CD8-positive, alpha-beta T cell (primary cell): ENCODE measurements at regions of chr10 and their contacts with region 1.

Region 1: GRCh38 chr10:59625721-59626522 is 83.7 kb downstream of the SLC16A9 start:
- DNase-seq: peak in 8 of 9 experiments; percentile 3 to 75 (median 34)
- ATAC-seq: peak; percentile 66
- H3K4me3 ChIP-seq: no peak overlapping the region
- H3K4me3 Mint-ChIP-seq: no peak overlapping the region
- H3K27ac ChIP-seq: no peak overlapping the region
- H3K27ac Mint-ChIP-seq: no peak overlapping the region
- H3K4me1 ChIP-seq: no peaks in the 10 kb centered on the region
- H3K4me1 Mint-ChIP-seq: peaks cover 3% of the 10 kb centered on the region
- H3K27me3 ChIP-seq: no peaks in the 10 kb centered on the region
- H3K27me3 Mint-ChIP-seq: peaks cover 2% of the 10 kb centered on the region
- CTCF ChIP-seq: peak; percentile 80

Region 2: DNA sequence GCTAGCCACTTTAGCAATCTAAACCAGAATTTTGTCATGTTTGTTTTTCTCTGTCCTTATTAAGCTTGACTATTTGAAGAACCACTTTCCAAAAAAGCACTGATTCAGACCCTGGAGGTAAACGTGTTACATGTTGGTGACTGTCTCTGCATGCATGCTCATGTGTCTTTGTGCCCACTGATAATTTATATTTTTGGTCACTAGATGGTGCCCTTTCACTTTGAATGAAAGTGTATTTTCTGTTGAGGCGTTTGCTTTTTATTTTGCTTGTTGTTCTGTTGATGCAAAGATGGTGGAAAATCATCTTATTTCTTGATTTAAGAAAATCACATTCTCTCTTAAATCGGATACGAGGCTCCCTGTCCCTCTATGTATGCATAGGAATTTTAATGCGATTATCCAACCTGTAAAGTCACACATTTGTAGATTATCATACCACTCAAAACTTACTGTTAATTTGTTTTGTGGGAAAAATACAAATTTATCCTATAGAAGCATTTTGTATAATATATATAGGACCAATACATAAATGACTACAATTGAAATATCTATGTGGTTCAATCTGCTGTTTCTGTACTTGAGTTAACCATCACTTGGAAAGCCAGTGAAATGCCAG is 843.9 kb before region 1 on chr10:
- CTCF ChIA-PET with region 1: no interaction called
- POLR2A ChIA-PET with region 1: no interaction called
- intact Hi-C with region 1: loop called (anchors 5 to 10 kb)
- DNase-seq: peak in 2 of 9 experiments; percentile 14 to 21
- ATAC-seq: no peak
- H3K4me3 ChIP-seq: no peak overlapping the region
- H3K4me3 Mint-ChIP-seq: no peak overlapping the region
- H3K27ac ChIP-seq: no peak overlapping the region
- H3K27ac Mint-ChIP-seq: no peak overlapping the region
- H3K4me1 ChIP-seq: no peaks in the 10 kb centered on the region
- H3K4me1 Mint-ChIP-seq: no peaks in the 10 kb centered on the region
- H3K27me3 ChIP-seq: no peaks in the 10 kb centered on the region
- H3K27me3 Mint-ChIP-seq: no peaks in the 10 kb centered on the region
- CTCF ChIP-seq: peak; percentile 45

Region 3: DNA sequence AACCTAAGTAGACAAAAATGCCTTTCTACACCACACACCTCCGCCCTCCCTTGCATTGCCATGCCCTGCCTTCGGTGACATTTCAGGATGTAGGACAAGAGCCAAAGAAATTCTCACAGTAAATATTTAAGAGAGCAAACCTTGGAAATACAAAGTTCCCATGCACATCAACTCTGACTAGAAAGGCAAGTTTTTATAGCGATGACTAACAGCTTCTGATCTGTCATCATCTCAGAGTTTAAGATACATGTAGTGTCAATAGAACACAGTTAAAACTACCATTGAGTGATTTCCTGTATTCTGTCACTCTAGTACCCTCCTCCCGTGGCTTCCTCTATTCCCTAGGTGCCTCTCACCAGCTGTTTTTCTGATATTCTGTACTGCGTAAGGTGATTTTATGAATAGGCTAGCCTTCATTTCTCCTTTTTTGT is 63.0 kb after region 1 on chr10:
- CTCF ChIA-PET with region 1: no interaction called
- POLR2A ChIA-PET with region 1: no interaction called
- intact Hi-C with region 1: no loop called
- DNase-seq: no peak
- ATAC-seq: no peak
- H3K4me3 ChIP-seq: no peak overlapping the region
- H3K4me3 Mint-ChIP-seq: no peak overlapping the region
- H3K27ac ChIP-seq: no peak overlapping the region
- H3K27ac Mint-ChIP-seq: no peak overlapping the region
- H3K4me1 ChIP-seq: no peaks in the 10 kb centered on the region
- H3K4me1 Mint-ChIP-seq: no peaks in the 10 kb centered on the region
- H3K27me3 ChIP-seq: no peaks in the 10 kb centered on the region
- H3K27me3 Mint-ChIP-seq: no peaks in the 10 kb centered on the region
- CTCF ChIP-seq: no peak

Region 4: GRCh38 chr10:59906417-59907202 is 280.7 kb after region 1 on chr10 and contains the start of gene CCDC6:
- CTCF ChIA-PET with region 1: interaction called, 5 read pairs
- POLR2A ChIA-PET with region 1: no interaction called
- intact Hi-C with region 1: loop called in 1 of 2 experiments (anchors 5 kb)
- DNase-seq: peak; percentile 87 to 96 (median 94)
- ATAC-seq: peak; percentile 89
- H3K4me3 ChIP-seq: peak within 1 kb of the TSS; percentile 80 to 84
- H3K4me3 Mint-ChIP-seq: peak within 1 kb of the TSS; percentile 95
- H3K27ac ChIP-seq: peak within 1 kb of the TSS; percentile 77 to 80
- H3K27ac Mint-ChIP-seq: peak within 1 kb of the TSS; percentile 97
- H3K4me1 ChIP-seq: peaks cover 41% of the 10 kb centered on the region
- H3K4me1 Mint-ChIP-seq: peaks cover 62% of the 10 kb centered on the region
- H3K27me3 ChIP-seq: no peaks in the 10 kb centered on the region
- H3K27me3 Mint-ChIP-seq: no peaks in the 10 kb centered on the region
- CTCF ChIP-seq: peak; percentile 80
- total RNA-seq, gene CCDC6: 21.6 to 23.7 TPM

Region 5: DNA sequence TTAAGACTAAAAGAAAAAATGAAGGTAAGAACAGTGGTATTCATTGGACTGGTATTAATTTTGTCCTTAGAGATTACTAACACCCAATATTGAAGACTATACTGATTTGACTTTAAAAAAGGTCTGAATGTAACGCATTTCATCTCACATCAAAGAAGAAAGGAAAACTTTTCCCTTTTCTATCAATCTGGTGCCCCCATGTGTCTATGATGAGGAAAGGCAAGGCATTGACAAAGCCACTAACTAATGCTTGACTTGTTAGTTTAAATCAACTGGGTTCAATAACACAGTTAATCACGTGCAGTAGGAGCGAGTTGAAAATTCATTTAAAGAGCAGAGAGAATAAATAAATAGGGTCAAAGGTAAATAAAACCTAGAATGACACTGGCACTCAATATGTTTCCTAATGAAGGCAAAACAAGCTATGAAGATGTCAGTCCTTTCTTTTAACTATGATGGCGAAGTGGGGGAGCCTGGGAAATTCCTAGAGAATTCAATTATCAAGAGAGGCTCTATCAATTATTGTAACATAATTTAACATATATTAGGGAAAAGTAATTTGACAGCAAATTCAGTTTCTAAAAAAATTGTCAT is 582.9 kb after region 1 on chr10:
- CTCF ChIA-PET with region 1: interaction called, 8 read pairs
- POLR2A ChIA-PET with region 1: no interaction called
- intact Hi-C with region 1: loop called in 1 of 2 experiments (anchors 5 kb)
- DNase-seq: peak in 1 of 9 experiments; percentile 18
- ATAC-seq: no peak
- H3K4me3 ChIP-seq: no peak overlapping the region
- H3K4me3 Mint-ChIP-seq: no peak overlapping the region
- H3K27ac ChIP-seq: no peak overlapping the region
- H3K27ac Mint-ChIP-seq: no peak overlapping the region
- H3K4me1 ChIP-seq: no peaks in the 10 kb centered on the region
- H3K4me1 Mint-ChIP-seq: peaks cover 16% of the 10 kb centered on the region
- H3K27me3 ChIP-seq: no peaks in the 10 kb centered on the region
- H3K27me3 Mint-ChIP-seq: peaks cover 6% of the 10 kb centered on the region
- CTCF ChIP-seq: no peak

Region 6: GRCh38 chr10:60769406-60769805 is 1143.5 kb after region 1 on chr10:
- CTCF ChIA-PET with region 1: no interaction called
- POLR2A ChIA-PET with region 1: no interaction called
- intact Hi-C with region 1: loop called in 1 of 2 experiments (anchors 5 kb)
- DNase-seq: no peak
- ATAC-seq: no peak
- H3K4me3 ChIP-seq: no peak overlapping the region
- H3K4me3 Mint-ChIP-seq: no peak overlapping the region
- H3K27ac ChIP-seq: no peak overlapping the region
- H3K27ac Mint-ChIP-seq: no peak overlapping the region
- H3K4me1 ChIP-seq: no peaks in the 10 kb centered on the region
- H3K4me1 Mint-ChIP-seq: no peaks in the 10 kb centered on the region
- H3K27me3 ChIP-seq: no peaks in the 10 kb centered on the region
- H3K27me3 Mint-ChIP-seq: no peaks in the 10 kb centered on the region
- CTCF ChIP-seq: no peak